Motor neuron (in vitro differentiated cells): ENCODE measurements at regions of chr14 and their contacts with region 1.

Region 1: GRCh38 chr14:23631702-23632460 is 4.3 kb upstream of the DHRS2 start:
- ATAC-seq: peak; percentile 61 to 93 (median 86)
- H3K4me3 ChIP-seq: no peak overlapping the region
- H3K27ac ChIP-seq: no peak overlapping the region
- H3K4me1 ChIP-seq: peaks cover 10 to 17% of the 10 kb centered on the region in 2 donors

Region 2: DNA sequence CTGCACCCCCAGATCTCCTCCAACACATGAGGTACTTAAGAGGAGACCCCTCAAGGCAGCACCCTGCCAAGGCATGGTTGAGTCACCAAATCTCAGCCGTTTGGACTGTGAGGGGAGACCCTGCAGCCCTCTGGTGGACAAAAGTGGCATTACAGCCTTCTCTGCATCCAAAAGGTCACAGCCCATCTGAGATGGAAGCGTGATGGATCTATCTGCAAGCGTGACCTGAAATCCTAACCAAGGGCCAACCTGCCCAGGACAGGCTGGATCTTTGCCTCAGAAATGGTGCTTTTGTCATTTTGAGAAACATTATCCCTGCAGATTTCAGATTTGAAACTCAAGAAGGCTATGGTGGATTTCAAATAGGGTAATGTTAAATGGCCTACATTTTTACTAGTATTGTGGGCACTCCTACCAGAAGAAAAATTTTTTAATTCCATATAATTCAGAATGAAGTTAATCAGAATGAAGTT is 298.0 kb after region 1 on chr14:
- in situ Hi-C with region 1: loop called in 5 of 9 experiments (anchors 25 kb)
- ATAC-seq: peak; percentile 69 to 94 (median 84)
- H3K4me3 ChIP-seq: no peak overlapping the region
- H3K27ac ChIP-seq: no peak overlapping the region
- H3K4me1 ChIP-seq: no peaks in the 10 kb centered on the region